Activated naive CD4-positive, alpha-beta T cell treated with anti-CD3 and anti-CD28 coated beads for 36 hours (primary cell): ENCODE measurements at regions of chr3 and their contacts with region 1.

Region 1: GRCh38 chr3:72818092-72818773 is 30.0 kb downstream of the SHQ1 start:
- DNase-seq: peak; percentile 13
- H3K4me3 Mint-ChIP-seq: no peak overlapping the region
- H3K27ac Mint-ChIP-seq: no peak overlapping the region
- H3K4me1 Mint-ChIP-seq: peaks cover 19% of the 10 kb centered on the region
- H3K27me3 Mint-ChIP-seq: no peaks in the 10 kb centered on the region

Region 2: GRCh38 chr3:71926262-71926600 is 892.0 kb before region 1 on chr3:
- CTCF ChIA-PET with region 1: no interaction called
- intact Hi-C with region 1: loop called (anchors 1 kb)
- DNase-seq: peak; percentile 54
- H3K4me3 Mint-ChIP-seq: no peak overlapping the region
- H3K27ac Mint-ChIP-seq: no peak overlapping the region
- H3K4me1 Mint-ChIP-seq: peaks cover 8% of the 10 kb centered on the region
- H3K27me3 Mint-ChIP-seq: no peaks in the 10 kb centered on the region

Region 3: GRCh38 chr3:72185549-72186399 is 632.5 kb before region 1 on chr3:
- CTCF ChIA-PET with region 1: interaction called, 3 read pairs
- intact Hi-C with region 1: loop called (anchors 5 kb)
- DNase-seq: peak; percentile 51
- H3K4me3 Mint-ChIP-seq: no peak overlapping the region
- H3K27ac Mint-ChIP-seq: no peak overlapping the region
- H3K4me1 Mint-ChIP-seq: peaks cover 21% of the 10 kb centered on the region
- H3K27me3 Mint-ChIP-seq: peaks cover 7% of the 10 kb centered on the region

Region 4: DNA sequence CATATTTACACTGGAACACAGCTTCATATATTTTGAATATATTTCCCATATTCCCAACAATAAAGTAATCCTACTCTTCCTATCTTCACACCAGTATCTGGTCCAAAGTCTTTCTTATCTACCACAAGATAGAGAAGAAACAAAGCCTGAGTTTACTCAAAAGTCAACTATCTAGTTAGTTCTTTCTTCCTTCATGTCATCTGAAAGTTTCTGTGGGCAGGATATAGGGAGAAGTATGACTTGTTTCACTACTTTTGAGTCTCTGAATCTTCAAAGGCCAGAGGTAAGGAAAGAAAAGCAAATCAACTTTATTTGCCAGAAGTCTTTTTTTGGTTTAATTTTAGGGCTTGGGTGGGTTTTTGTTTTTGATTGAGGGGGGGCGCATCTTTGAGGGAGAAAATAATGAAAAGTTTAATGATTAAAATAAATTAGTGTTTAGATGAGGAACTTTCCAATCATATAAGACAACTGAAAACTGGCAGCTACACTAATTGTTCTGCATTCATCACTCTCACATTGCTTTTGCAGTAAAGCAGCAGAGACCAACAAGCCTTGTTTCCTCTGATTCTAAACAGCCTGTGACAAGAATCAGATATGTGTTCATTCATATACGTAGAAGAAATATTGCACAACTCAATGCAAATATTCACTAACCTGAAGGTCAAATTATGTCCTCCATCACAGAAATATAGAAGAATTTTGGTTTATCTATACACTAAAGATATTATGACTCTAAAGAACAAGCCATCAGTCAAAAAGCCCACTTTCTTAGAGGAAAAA is 391.4 kb before region 1 on chr3:
- CTCF ChIA-PET with region 1: no interaction called
- intact Hi-C with region 1: loop called (anchors 5 kb)
- DNase-seq: no peak
- H3K4me3 Mint-ChIP-seq: no peak overlapping the region
- H3K27ac Mint-ChIP-seq: no peak overlapping the region
- H3K4me1 Mint-ChIP-seq: peaks cover 70% of the 10 kb centered on the region
- H3K27me3 Mint-ChIP-seq: no peaks in the 10 kb centered on the region

Region 5: DNA sequence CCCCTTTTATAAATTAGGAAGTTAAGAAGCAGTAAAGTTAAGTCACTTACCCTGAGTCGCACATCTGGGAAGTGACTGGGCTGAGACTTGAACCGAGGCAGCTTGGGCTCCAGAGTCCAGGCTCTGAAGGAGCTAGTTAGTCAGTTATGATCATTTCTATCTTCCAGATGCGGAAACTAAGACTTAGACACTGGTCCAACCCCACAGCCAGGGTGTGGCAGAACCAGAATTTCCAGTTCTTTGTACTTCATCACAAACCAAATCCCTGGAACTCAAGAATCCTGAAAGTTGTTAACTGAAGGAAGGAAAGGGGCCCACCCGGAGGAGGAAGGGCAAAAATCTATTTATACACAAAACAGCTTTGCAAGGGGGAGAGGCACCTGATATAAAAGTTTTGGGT is 359.9 kb before region 1 on chr3:
- CTCF ChIA-PET with region 1: no interaction called
- intact Hi-C with region 1: no loop called
- DNase-seq: no peak
- H3K4me3 Mint-ChIP-seq: no peak overlapping the region
- H3K27ac Mint-ChIP-seq: no peak overlapping the region
- H3K4me1 Mint-ChIP-seq: peaks cover 17% of the 10 kb centered on the region
- H3K27me3 Mint-ChIP-seq: peaks cover 17% of the 10 kb centered on the region

Region 6: DNA sequence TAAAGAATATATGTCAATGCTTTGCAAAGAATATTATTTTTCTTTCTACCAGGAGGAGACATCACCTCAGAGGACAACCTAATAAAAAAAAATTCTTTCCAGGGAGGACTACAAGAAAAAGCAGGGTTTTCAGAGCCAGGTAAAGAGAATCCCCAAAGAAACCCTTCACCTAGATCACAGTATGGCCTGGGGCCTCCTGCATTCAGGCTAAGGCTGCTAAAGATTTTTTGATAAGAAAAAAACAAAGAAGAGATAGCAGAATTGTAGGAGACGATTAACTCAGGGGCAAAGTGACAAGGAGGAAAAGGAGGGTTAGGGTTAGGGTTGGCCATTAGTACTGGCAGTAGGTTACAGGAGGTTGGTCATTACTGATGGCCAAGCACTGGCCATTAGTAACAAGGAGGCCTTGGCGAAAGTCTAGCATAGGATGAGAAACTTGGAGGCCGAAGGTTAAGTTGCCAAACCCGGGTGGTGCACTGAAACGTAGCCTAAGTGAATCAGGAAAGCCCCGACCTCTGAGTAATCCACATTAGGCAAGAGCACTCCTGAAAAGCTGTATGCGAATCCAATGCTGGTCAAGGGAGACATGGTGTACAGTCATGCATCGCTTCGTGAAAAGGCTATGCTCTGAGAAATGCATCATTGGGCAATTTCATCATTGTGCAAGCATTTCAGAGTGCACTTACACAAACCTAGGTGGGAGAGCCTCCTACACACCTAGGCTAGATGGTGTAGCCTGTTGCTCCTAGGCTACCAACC is 192.8 kb before region 1 on chr3:
- CTCF ChIA-PET with region 1: no interaction called
- intact Hi-C with region 1: no loop called
- DNase-seq: peak; percentile 14
- H3K4me3 Mint-ChIP-seq: no peak overlapping the region
- H3K27ac Mint-ChIP-seq: no peak overlapping the region
- H3K4me1 Mint-ChIP-seq: peaks cover 32% of the 10 kb centered on the region
- H3K27me3 Mint-ChIP-seq: no peaks in the 10 kb centered on the region

Region 7: DNA sequence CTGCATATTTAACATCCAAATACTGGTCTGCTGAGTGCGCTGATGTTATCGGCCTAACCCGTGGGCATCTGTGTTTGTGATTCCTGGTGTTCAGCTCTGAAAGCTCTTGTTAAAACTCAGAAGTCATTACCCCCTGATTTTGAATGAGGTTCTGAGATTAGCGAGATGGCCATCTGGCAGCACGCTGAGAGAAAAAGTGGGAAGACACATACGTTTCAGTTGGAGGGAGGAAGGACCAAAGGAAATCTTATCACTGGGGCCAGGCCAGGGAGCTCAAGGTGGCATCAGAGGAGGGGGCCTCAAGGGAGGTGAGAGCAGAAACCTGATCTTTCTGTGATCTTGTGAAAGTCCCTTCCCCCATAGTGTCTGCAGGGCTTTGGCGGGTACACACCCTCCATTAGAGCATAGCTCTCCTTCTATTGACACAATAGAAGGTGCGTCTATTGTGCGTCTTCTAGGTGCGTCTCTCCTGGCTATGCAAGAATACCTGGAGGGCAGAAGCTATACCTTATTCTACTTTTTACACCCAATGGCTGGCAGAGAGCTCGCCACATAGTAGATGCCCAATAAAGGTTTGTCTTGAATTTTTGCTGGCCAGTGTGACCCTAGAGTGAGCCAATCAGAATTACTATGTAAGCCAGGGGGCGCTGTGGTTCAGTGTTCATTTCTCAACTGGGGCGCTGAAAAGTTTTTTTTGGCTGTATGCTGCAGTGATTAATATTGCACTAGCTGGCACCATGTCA is 152.4 kb before region 1 on chr3:
- CTCF ChIA-PET with region 1: interaction called, 88 read pairs
- intact Hi-C with region 1: loop called (anchors 1 kb)
- DNase-seq: peak; percentile 81
- H3K4me3 Mint-ChIP-seq: no peak overlapping the region
- H3K27ac Mint-ChIP-seq: no peak overlapping the region
- H3K4me1 Mint-ChIP-seq: no peaks in the 10 kb centered on the region
- H3K27me3 Mint-ChIP-seq: no peaks in the 10 kb centered on the region

Region 8: DNA sequence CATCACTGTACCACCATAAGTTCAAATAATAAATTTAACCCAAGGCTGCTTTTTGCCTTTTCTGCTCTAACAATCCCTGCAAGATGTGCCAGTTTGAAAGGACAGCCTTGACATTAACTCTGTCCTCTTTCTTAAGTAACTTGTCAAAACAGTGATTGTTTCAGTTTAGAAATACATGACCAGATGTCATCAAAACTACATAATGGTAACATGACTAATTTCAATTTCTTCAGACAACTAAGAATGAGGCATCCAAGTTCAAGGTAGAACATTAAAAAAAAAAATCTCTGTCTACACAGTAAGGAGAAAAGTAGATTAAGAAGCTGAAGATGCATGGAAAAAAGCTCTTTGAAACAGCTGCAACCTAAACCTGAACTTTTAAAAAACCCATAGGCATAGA is 17.4 kb before region 1 on chr3:
- CTCF ChIA-PET with region 1: interaction called, 4 read pairs
- intact Hi-C with region 1: loop called (anchors 1 kb)
- DNase-seq: no peak
- H3K4me3 Mint-ChIP-seq: no peak overlapping the region
- H3K27ac Mint-ChIP-seq: no peak overlapping the region
- H3K4me1 Mint-ChIP-seq: peaks cover 26% of the 10 kb centered on the region
- H3K27me3 Mint-ChIP-seq: no peaks in the 10 kb centered on the region

Region 9: DNA sequence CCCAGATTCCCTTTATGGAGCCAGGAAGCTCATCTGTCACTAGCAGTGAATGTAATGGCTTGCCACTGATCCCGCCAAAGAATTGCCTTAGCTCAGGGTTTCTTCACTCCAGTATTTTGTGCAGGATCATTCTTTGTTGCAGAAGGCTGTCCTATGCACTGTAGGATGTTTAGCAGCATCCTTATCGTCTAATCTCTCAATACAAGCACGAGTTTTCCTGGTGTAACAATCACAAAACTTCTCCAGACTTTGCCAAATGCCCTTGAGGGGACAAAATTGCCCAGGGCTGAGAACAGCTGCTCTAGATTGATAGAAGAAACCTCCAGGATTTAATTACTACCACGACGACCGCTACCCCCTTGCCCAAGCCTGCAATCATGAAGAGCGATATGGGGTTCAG is 36.8 kb after region 1 on chr3:
- CTCF ChIA-PET with region 1: no interaction called
- intact Hi-C with region 1: no loop called
- DNase-seq: no peak
- H3K4me3 Mint-ChIP-seq: no peak overlapping the region
- H3K27ac Mint-ChIP-seq: no peak overlapping the region
- H3K4me1 Mint-ChIP-seq: no peaks in the 10 kb centered on the region
- H3K27me3 Mint-ChIP-seq: no peaks in the 10 kb centered on the region